ENCODE measurements at regions of chr1 and their contacts with region 1.

Region 1: DNA sequence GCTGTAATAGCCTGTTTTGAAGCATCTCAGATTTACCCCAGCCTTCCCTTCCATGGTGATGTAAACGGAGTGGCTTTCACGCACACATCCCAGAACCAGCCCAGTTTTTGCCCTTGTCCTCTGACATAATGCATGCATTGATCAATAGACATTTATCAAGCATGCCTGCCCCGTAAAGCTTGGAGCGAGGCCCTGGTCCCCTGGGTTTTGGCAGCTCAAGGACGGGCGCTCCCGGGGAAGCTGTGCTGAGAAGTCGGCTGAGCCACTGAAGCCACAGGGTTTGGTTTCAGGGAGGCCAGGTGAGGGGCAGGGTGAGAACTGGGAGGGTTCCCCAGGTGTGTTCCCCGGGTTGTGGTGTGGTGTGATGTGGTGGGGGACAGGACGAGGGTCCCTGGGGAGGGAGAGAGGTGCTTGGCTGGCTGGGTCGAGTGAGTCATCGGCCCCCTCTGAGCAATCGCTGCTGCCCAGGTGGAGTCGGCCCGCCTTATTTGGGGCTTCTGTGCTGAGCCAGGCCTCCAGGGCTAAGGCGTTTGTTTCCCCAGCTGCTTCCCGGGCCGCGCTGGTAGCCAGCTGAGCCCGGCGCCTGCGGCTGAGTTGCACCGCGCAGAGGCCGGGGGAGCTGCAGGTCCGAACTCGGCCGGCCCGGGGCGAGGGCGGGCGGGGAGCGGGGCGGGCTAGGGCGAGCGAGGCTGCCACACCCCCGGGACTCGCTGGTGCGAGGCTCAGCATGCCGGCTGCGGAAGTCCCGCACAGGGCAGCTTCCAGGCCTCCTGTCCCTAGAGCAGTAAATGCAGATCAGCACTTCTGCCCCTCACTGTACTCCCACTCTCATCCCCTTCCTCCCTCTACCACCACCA is 23.6 kb downstream of the ATP2B4 start:
- DNase-seq: peak; percentile 50 to 93 (median 88)
- H3K4me3 ChIP-seq: peak overlapping the region in 3 of 7 experiments; percentile 34 to 49 (median 41)
- H3K27ac ChIP-seq: no peak overlapping the region
- H3K4me1 ChIP-seq: peaks cover 6 to 54% (median 42%) of the 10 kb centered on the region in 4 experiments
- H3K27me3 ChIP-seq: no peaks in the 10 kb centered on the region

Region 2: DNA sequence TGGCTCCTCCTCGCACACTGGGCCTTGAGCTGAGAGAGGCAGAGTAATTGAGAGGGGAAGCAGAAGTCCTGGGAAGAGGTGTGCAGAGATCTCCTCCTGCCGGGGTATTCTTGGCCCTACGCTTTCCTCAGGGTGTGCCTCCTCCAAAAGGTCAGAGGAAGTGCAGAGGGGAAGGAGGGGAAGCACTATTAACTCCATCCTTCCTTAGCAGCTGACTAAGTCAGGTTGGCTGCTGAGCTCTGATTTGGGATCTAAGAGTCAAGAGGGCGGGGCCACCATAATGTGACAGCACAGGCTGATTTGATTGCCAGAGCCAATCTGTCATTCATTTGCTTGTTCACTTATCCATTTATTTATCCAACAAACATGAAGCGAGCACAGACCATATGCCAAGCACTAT is 11.3 kb before region 1 on chr1:
- CTCF ChIA-PET with region 1: interaction called, 10 read pairs
- POLR2A ChIA-PET with region 1: no interaction called
- DNase-seq: peak; percentile 31 to 39 (median 36)
- H3K4me3 ChIP-seq: no peak overlapping the region
- H3K27ac ChIP-seq: no peak overlapping the region
- H3K4me1 ChIP-seq: peaks cover 4 to 24% (median 18%) of the 10 kb centered on the region in 4 experiments
- H3K27me3 ChIP-seq: no peaks in the 10 kb centered on the region

Region 3: GRCh38 chr1:203663294-203663693 is 13.1 kb after region 1 on chr1:
- CTCF ChIA-PET with region 1: interaction called, 17 read pairs
- POLR2A ChIA-PET with region 1: interaction called, 3 read pairs
- DNase-seq: peak in 2 of 3 donors; percentile 50 to 62
- H3K4me3 ChIP-seq: no peak overlapping the region
- H3K27ac ChIP-seq: no peak overlapping the region
- H3K4me1 ChIP-seq: peaks cover 0 to 45% (median 25%) of the 10 kb centered on the region in 4 experiments
- H3K27me3 ChIP-seq: no peaks in the 10 kb centered on the region

Measured in common myeloid progenitor, CD34-positive (primary cell).